Activated CD8-positive, alpha-beta memory T cell treated with anti-CD3 and anti-CD28 coated beads, Interleukin-2, amount 10 ng/mL, durations not matched to agents 7 days and 5 days (primary cell): ENCODE measurements at regions of chr5 and their contacts with region 1.

Region 1: DNA sequence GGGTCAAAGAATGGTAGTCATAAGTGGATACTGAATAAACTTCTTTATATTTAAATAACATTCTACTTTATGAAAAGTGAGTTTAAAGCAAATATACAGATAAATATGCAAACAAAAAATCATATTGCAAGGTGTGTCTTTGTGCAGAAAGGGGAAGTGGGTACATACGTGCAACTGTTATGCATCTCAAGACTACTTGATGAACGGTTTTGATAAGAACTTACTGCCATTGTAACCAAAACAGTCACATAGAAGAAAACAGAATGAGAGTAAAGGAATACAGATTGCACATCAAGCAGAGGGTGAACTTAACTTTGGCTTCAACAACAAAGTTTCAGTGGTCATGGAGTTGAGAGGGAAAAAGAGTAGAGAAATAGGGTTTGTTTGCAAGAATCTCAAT is 9.9 kb downstream of the CAMK4 start:
- DNase-seq: no peak
- ATAC-seq: peak; percentile 14
- H3K4me3 Mint-ChIP-seq: peak overlapping the region; percentile 58
- H3K27ac Mint-ChIP-seq: peak overlapping the region; percentile 96
- H3K4me1 Mint-ChIP-seq: peaks cover 89% of the 10 kb centered on the region
- H3K27me3 Mint-ChIP-seq: no peaks in the 10 kb centered on the region

Region 2: GRCh38 chr5:111099058-111099778 is 134.9 kb before region 1 on chr5:
- CTCF ChIA-PET with region 1: no interaction called
- DNase-seq: no peak
- ATAC-seq: no peak
- H3K4me3 Mint-ChIP-seq: no peak overlapping the region
- H3K27ac Mint-ChIP-seq: no peak overlapping the region
- H3K4me1 Mint-ChIP-seq: peaks cover 21% of the 10 kb centered on the region
- H3K27me3 Mint-ChIP-seq: no peaks in the 10 kb centered on the region

Region 3: GRCh38 chr5:111248571-111248970 is 14.4 kb after region 1 on chr5:
- CTCF ChIA-PET with region 1: interaction called, 14 read pairs
- DNase-seq: no peak
- ATAC-seq: no peak
- H3K4me3 Mint-ChIP-seq: no peak overlapping the region
- H3K27ac Mint-ChIP-seq: peak overlapping the region; percentile 31
- H3K4me1 Mint-ChIP-seq: peaks cover 66% of the 10 kb centered on the region
- H3K27me3 Mint-ChIP-seq: no peaks in the 10 kb centered on the region